AG04450 (cell line): ENCODE measurements at regions of chr11 and their contacts with region 1.

Region 1: DNA sequence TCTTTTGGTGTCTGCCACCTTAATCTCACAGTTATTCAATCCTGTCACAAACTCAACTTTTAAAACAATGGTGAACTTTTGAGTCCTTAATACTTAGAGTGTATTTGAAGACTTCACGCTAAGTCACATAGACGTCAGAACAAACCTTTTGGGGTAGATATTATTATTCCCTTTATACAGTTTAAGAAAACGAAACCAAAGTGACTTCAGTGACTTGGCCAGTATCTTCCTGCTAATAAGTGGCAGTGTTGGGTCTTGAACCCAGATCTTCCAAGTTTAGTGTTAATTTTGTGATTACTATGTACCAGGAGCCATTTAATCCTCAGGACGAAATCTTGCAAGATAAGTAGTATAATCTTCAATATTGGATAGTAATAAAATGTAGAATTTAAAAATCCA is 694 bp downstream of the CEP295 start:
- DNase-seq: no peak
- H3K4me3 ChIP-seq: peak overlapping the region; percentile 96
- H3K27ac ChIP-seq: no peak overlapping the region
- H3K27me3 ChIP-seq: peaks cover 2% of the 10 kb centered on the region
- CTCF ChIP-seq: no peak

Region 2: GRCh38 chr11:92931746-92932422 is 730.3 kb before region 1 on chr11:
- CTCF ChIA-PET with region 1: no interaction called
- POLR2A ChIA-PET with region 1: interaction called, 11 read pairs
- DNase-seq: no peak
- H3K4me3 ChIP-seq: no peak overlapping the region
- H3K27ac ChIP-seq: no peak overlapping the region
- H3K27me3 ChIP-seq: no peaks in the 10 kb centered on the region
- CTCF ChIP-seq: no peak